A549 (cell line): ENCODE measurements at regions of chr2 and their contacts with region 1.

Region 1: DNA sequence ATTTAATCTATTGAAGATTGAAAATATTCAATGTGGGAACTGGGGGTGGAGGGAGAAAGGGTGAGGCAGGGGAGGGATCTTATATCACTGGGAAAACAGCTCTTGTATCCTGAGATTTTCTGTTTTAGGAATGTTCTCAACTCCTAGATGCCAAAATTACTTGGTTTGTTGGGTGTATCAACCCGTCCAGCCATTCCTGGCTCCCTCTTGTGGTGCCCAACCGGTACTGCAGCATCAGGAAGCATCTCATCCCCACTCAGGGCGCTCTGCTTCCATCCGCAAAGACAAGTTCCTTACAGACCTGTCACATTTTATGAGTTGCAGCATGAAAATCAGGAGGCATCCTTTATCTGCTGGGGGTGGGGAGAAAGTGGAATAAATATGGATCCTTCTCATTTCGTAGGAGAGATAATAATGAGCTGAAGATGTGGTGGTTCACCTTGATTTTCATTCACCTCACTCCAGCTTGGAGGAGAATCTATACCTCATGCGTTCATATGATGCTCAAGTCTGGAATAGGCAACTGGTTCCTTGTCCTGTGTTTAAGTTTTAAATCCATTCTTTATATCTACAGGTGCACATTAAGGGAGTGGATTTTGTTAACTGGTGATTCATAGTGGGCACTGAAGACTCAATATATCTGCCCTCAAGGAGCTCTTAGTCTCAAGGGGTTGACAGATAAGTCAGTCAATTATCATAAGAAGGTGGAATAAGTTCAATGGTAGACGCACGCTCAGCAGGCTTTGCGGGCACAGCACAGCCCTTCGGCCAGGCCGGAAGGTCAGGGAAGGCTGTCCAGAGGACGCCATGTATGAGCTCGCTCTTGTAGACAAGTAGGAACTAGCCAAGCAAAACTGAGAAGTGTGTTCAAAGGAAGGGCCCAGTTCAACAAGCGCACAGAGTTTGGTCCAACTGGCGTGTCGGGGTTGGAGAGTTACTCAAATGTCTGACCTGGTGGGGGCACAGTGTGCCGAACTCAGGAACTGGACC is 127.3 kb downstream of the RNF144A start:
- DNase-seq: peak; percentile 57 to 77
- ATAC-seq: peak; percentile 86 to 95
- H3K4me3 ChIP-seq: no peak overlapping the region
- H3K27ac ChIP-seq: no peak overlapping the region
- H3K4me1 ChIP-seq: no peaks in the 10 kb centered on the region
- CTCF ChIP-seq: peak; percentile 88
- EP300 ChIP-seq: no peak
- POLR2A ChIP-seq: no peak
- RAD21 ChIP-seq: peak; percentile 64 to 70

Region 2: DNA sequence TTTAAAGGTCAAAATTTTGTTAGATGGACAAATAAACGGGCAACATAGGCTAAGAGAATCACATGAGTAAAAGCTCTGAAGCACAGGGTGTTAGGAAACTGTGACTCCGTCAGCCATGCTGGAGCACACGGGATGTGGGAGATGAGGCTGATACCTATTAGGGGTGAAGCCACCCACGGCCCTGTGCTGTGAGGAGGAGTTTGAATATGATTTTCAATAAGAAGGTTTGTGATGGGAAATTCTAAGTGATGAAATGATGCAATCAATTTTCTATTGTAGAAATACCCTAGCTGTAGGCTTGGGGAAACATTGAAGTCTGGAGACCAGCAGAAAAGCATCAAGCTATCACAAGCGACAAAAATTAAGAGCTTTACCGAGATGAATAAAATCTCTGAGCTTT is 610.1 kb before region 1 on chr2:
- CTCF ChIA-PET with region 1: no interaction called
- POLR2A ChIA-PET with region 1: no interaction called
- DNase-seq: no peak
- ATAC-seq: no peak
- H3K4me3 ChIP-seq: no peak overlapping the region
- H3K27ac ChIP-seq: no peak overlapping the region
- H3K4me1 ChIP-seq: no peaks in the 10 kb centered on the region
- CTCF ChIP-seq: no peak
- EP300 ChIP-seq: no peak
- POLR2A ChIP-seq: no peak
- RAD21 ChIP-seq: no peak

Region 3: DNA sequence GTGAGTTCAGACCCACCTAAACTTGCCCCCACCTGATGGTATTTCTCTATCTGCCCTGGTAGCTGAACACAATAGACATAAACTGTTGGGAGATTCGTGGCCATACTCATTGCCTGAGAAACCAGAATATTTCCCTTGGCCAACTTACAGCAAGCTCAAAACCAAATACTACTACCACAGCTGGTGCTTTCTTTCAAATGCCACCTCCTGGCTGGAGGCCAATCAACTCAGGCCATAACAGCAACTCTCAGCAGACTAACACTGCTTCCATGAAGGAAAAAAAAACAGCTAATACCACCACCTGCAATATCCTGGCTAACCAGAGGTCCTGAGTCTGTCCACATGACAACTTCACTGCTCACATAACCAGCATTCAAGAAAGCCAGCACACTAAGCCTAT is 552.0 kb before region 1 on chr2:
- CTCF ChIA-PET with region 1: no interaction called
- POLR2A ChIA-PET with region 1: no interaction called
- DNase-seq: no peak
- ATAC-seq: no peak
- H3K4me3 ChIP-seq: no peak overlapping the region
- H3K27ac ChIP-seq: no peak overlapping the region
- H3K4me1 ChIP-seq: no peaks in the 10 kb centered on the region
- CTCF ChIP-seq: no peak
- EP300 ChIP-seq: no peak
- POLR2A ChIP-seq: no peak
- RAD21 ChIP-seq: no peak

Region 4: GRCh38 chr2:6887751-6888192 is 156.8 kb before region 1 on chr2:
- CTCF ChIA-PET with region 1: interaction called, 44 read pairs
- POLR2A ChIA-PET with region 1: no interaction called
- DNase-seq: no peak
- ATAC-seq: no peak
- H3K4me3 ChIP-seq: no peak overlapping the region
- H3K27ac ChIP-seq: no peak overlapping the region
- H3K4me1 ChIP-seq: no peaks in the 10 kb centered on the region
- CTCF ChIP-seq: no peak
- EP300 ChIP-seq: no peak
- POLR2A ChIP-seq: no peak
- RAD21 ChIP-seq: no peak

Region 5: GRCh38 chr2:6917071-6917760 is 127.3 kb before region 1 on chr2 and contains the start of gene RNF144A:
- CTCF ChIA-PET with region 1: interaction called, 20 read pairs
- POLR2A ChIA-PET with region 1: no interaction called
- DNase-seq: peak; percentile 53 to 80
- ATAC-seq: peak; percentile 81 to 83
- H3K4me3 ChIP-seq: peak within 1 kb of the TSS; percentile 75
- H3K27ac ChIP-seq: peak within 1 kb of the TSS; percentile 78 to 93
- H3K4me1 ChIP-seq: peaks cover 9% of the 10 kb centered on the region; the same call in 1 of the 3 replicates
- CTCF ChIP-seq: peak; percentile 97
- EP300 ChIP-seq: no peak
- POLR2A ChIP-seq: peak; percentile 52
- RAD21 ChIP-seq: no peak; a peak in 1 of 5 replicates
- polyA plus RNA-seq, gene RNF144A: 9.1 and 9.6 TPM in 2 replicates

Region 6: DNA sequence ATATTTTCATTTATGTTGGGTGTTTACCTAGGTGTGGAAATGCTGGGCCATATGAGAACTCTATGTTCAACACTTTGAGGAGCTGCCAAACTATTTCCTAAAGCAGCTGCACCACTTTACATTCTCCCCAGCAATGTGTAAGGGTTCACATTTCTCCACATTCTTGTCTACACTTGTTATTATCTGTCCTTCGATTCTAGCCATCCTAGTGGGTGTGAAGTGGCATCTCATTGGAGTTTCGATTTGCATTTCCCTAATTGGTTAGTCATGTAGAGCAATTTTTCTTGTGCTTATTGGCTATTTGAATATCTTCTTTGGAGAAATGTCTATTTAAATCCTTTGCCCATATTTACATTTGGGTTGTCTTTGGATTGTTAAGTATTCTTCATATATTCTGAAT is 105.5 kb before region 1 on chr2:
- CTCF ChIA-PET with region 1: no interaction called
- POLR2A ChIA-PET with region 1: no interaction called
- DNase-seq: no peak
- ATAC-seq: no peak
- H3K4me3 ChIP-seq: no peak overlapping the region
- H3K27ac ChIP-seq: no peak overlapping the region
- H3K4me1 ChIP-seq: no peaks in the 10 kb centered on the region
- CTCF ChIP-seq: no peak
- EP300 ChIP-seq: no peak
- POLR2A ChIP-seq: no peak
- RAD21 ChIP-seq: no peak

Region 7: GRCh38 chr2:7004636-7005035 is 39.9 kb before region 1 on chr2:
- CTCF ChIA-PET with region 1: interaction called, 11 read pairs
- POLR2A ChIA-PET with region 1: no interaction called
- DNase-seq: no peak
- ATAC-seq: no peak
- H3K4me3 ChIP-seq: no peak overlapping the region
- H3K27ac ChIP-seq: no peak overlapping the region
- H3K4me1 ChIP-seq: no peaks in the 10 kb centered on the region
- CTCF ChIP-seq: no peak
- EP300 ChIP-seq: no peak
- POLR2A ChIP-seq: no peak
- RAD21 ChIP-seq: no peak

Region 8: DNA sequence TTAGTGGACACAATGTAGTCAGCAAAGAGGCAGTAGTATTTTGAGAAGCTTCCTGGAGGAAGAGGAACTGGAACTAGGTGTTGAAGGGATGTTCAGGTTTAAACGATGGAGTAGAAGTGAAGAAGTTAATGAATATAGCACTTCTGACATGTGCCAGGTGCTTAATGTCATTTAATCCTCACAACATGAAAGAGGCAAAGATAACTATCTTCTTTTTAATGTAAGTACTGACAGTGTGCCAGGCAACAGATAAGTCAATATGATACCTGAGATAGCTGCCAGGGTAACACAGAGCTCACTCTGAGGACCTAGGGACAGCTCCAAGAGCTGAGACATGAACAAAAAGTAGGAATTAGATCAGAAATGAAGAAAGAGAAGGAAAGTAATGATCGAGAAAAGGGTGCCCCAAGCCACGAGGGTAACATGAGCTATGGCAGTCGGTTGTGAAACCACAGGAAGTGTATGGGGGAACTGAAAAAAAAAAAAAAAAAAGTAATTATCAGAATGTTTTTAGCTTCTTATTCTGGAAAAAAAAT is 13.4 kb after region 1 on chr2:
- CTCF ChIA-PET with region 1: interaction called, 28 read pairs
- POLR2A ChIA-PET with region 1: no interaction called
- DNase-seq: no peak
- ATAC-seq: no peak
- H3K4me3 ChIP-seq: no peak overlapping the region
- H3K27ac ChIP-seq: no peak overlapping the region
- H3K4me1 ChIP-seq: no peaks in the 10 kb centered on the region
- CTCF ChIP-seq: no peak
- EP300 ChIP-seq: no peak
- POLR2A ChIP-seq: no peak
- RAD21 ChIP-seq: no peak

Region 9: DNA sequence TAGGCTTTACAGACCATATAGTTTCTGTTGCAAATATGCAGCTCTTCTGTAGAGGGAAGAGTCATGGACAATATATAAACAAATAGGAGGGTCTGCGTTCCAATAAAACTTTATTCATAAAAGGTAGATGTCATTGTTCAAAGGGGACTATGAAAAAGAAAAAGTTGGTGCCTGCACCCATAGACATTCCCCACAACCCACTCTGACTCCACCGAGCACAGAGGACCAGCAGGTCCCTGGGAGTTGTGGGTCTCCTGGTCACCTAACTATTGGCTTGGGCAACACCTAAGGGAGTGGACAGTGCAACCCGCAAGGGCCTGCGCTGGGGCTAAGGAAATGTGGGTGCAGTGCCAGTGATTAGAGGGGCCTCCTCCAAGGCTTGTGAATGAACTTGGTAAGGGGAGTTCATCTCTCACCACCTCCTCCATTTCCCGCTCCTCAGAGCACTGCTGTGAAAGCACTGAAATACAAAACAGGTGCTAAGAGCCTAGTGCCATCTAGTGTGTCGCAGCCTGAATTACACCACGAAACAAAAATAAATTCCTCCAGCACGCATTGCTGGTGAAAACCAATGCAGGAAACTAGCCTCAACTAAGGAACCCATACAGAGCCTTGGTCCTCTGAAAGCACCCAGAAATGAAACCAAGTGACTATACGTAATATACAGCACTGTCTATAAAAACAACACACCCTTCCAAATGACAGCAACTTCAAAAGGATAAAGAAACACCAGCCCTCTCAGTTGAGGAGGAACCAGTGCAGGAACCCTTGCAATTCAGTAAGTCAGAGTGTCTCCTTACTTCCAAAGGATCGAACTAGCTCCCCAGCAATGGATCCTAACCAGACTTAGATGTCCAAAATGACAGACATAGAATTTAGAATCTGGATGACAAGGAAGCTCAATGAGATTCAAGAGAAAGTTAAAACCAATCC is 39.3 kb after region 1 on chr2:
- CTCF ChIA-PET with region 1: interaction called, 12 read pairs
- POLR2A ChIA-PET with region 1: no interaction called
- DNase-seq: peak in 1 of 2 experiments; percentile 64
- ATAC-seq: peak; percentile 66 to 90; a peak in 4 of 6 replicates
- H3K4me3 ChIP-seq: no peak overlapping the region
- H3K27ac ChIP-seq: no peak overlapping the region
- H3K4me1 ChIP-seq: no peaks in the 10 kb centered on the region
- CTCF ChIP-seq: peak; percentile 54
- EP300 ChIP-seq: no peak
- POLR2A ChIP-seq: no peak
- RAD21 ChIP-seq: peak; percentile 50 to 78; a peak in 4 of 5 replicates